Endothelial cell of umbilical vein (primary cell): ENCODE measurements at regions of chr11 and their contacts with region 1.

Region 1: GRCh38 chr11:113773416-113774173 is at the start of gene ZW10:
- DNase-seq: peak; percentile 99
- H3K4me3 ChIP-seq: peak within 1 kb of the TSS; percentile 61 to 97 (median 87)
- H3K27ac ChIP-seq: peak within 1 kb of the TSS; percentile 75
- H3K4me1 ChIP-seq: peaks cover 6% of the 10 kb centered on the region
- H3K27me3 ChIP-seq: peaks cover 11 to 22% of the 10 kb centered on the region in 2 experiments
- CTCF ChIP-seq: peak; percentile 67 to 75
- POLR2A ChIP-seq: peak; percentile 71
- total RNA-seq, gene ZW10: 22.1 and 22.9 TPM in 2 replicates

Region 2: GRCh38 chr11:113314389-113315301 is 458.9 kb before region 1 on chr11 and contains the start of gene TTC12:
- CTCF ChIA-PET with region 1: interaction called, 5 read pairs
- POLR2A ChIA-PET with region 1: no interaction called
- dilution Hi-C with region 1: no loop called
- intact Hi-C with region 1: loop called (anchors 1 kb)
- DNase-seq: peak; percentile 93
- H3K4me3 ChIP-seq: peak within 1 kb of the TSS; percentile 32 to 80 (median 57)
- H3K27ac ChIP-seq: peak within 1 kb of the TSS; percentile 67
- H3K4me1 ChIP-seq: peaks cover 3% of the 10 kb centered on the region
- H3K27me3 ChIP-seq: no peaks in the 10 kb centered on the region
- CTCF ChIP-seq: no peak
- POLR2A ChIP-seq: peak; percentile 60
- total RNA-seq, gene TTC12: 2.2 and 5.2 TPM in 2 replicates

Region 3: GRCh38 chr11:113384551-113384950 is 389.0 kb before region 1 on chr11:
- CTCF ChIA-PET with region 1: no interaction called
- POLR2A ChIA-PET with region 1: no interaction called
- dilution Hi-C with region 1: no loop called
- intact Hi-C with region 1: loop called (anchors 5 kb)
- DNase-seq: peak; percentile 94
- H3K4me3 ChIP-seq: no peak overlapping the region
- H3K27ac ChIP-seq: peak overlapping the region; percentile 70
- H3K4me1 ChIP-seq: peaks cover 24% of the 10 kb centered on the region
- H3K27me3 ChIP-seq: peaks cover 2% of the 10 kb centered on the region in 2 experiments
- CTCF ChIP-seq: no peak
- POLR2A ChIP-seq: peak; percentile 46

Region 4: DNA sequence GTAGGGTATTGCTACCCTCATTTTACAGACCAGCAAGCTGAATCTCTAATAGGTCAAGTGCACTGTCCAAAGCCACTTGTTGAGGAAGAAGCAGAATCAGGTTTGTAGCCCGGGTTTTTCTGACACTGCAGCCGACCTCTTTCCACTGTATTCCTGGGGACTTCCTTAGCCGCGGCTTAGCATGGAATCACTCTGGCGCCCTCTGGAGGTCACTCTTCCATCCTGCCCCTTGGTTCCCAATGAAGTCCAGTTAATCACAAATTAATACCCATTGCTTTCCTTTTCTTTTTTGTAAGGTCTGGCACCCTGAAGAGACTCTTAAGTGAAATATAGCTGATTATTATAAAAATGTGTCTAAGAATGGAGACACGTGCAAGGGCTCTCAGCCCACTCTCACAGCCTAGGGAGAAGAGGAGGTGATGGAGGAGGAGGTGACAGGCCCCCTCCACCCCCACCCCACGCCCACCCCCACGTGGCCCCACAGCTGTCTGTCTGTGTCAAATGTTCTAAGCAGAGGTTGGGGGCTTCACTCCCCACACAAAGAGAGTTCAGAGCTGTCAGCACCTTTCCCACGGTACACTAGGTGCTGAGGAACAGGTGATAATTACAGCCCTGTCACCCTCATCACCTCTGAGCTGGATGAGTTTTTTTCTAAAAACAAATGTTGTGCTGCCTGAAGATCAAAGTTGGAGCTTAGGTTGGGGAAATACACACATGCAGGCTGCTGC is 240.7 kb before region 1 on chr11:
- CTCF ChIA-PET with region 1: no interaction called
- POLR2A ChIA-PET with region 1: no interaction called
- dilution Hi-C with region 1: no loop called
- intact Hi-C with region 1: loop called (anchors 10 kb)
- DNase-seq: peak; percentile 64
- H3K4me3 ChIP-seq: no peak overlapping the region
- H3K27ac ChIP-seq: no peak overlapping the region
- H3K4me1 ChIP-seq: no peaks in the 10 kb centered on the region
- H3K27me3 ChIP-seq: no peaks in the 10 kb centered on the region
- CTCF ChIP-seq: peak; percentile 75 to 86
- POLR2A ChIP-seq: no peak

Region 5: DNA sequence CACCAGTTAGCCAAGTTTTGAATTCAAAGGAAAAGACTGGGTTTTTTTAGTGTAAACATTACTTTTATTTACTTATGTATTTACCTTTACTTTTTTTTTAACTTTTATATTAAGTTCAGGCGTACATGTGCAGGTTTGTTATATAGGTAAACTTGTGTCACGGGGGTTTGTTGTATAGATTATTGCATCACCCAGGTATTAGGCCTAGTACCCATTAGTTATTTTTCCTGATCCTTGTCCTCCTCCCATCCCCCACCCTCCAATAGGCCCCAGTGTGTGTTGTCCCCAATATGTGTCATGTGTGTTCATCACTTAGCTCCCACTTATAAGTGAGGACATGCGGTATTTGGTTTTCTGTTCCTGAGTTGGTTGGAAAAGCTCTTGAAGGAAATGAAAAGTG is 20.7 kb before region 1 on chr11:
- CTCF ChIA-PET with region 1: interaction called, 10 read pairs
- POLR2A ChIA-PET with region 1: no interaction called
- dilution Hi-C with region 1: no loop called
- intact Hi-C with region 1: no loop called
- DNase-seq: no peak
- H3K4me3 ChIP-seq: no peak overlapping the region
- H3K27ac ChIP-seq: no peak overlapping the region
- H3K4me1 ChIP-seq: no peaks in the 10 kb centered on the region
- H3K27me3 ChIP-seq: no peaks in the 10 kb centered on the region
- CTCF ChIP-seq: no peak
- POLR2A ChIP-seq: no peak

Region 6: GRCh38 chr11:113796663-113797259 is 23.2 kb after region 1 on chr11:
- CTCF ChIA-PET with region 1: interaction called, 23 read pairs
- POLR2A ChIA-PET with region 1: no interaction called
- dilution Hi-C with region 1: no loop called
- intact Hi-C with region 1: no loop called
- DNase-seq: peak; percentile 49
- H3K4me3 ChIP-seq: no peak overlapping the region
- H3K27ac ChIP-seq: no peak overlapping the region
- H3K4me1 ChIP-seq: no peaks in the 10 kb centered on the region
- H3K27me3 ChIP-seq: no peaks in the 10 kb centered on the region
- CTCF ChIP-seq: peak; percentile 45 to 62
- POLR2A ChIP-seq: no peak

Region 7: GRCh38 chr11:113875234-113876073 is 101.9 kb after region 1 on chr11 and contains the start of gene USP28:
- CTCF ChIA-PET with region 1: interaction called, 4 read pairs
- POLR2A ChIA-PET with region 1: no interaction called
- dilution Hi-C with region 1: no loop called
- intact Hi-C with region 1: loop called (anchors 1 kb)
- DNase-seq: peak; percentile 95
- H3K4me3 ChIP-seq: peak within 1 kb of the TSS; percentile 47 to 94 (median 94)
- H3K27ac ChIP-seq: peak within 1 kb of the TSS; percentile 92
- H3K4me1 ChIP-seq: peaks cover 24% of the 10 kb centered on the region
- H3K27me3 ChIP-seq: no peaks in the 10 kb centered on the region
- CTCF ChIP-seq: no peak
- POLR2A ChIP-seq: peak; percentile 97
- total RNA-seq, gene USP28: 29.6 and 30.5 TPM in 2 replicates